Activated CD4-positive, alpha-beta memory T cell treated with anti-CD3 and anti-CD28 coated beads for 36 hours (primary cell): ENCODE measurements at regions of chr12 and their contacts with region 1.

Region 1: GRCh38 chr12:48197971-48198671 is 5.0 kb downstream of the OR10AD1 start:
- DNase-seq: peak; percentile 97
- H3K4me3 Mint-ChIP-seq: peak overlapping the region; percentile 86
- H3K27ac Mint-ChIP-seq: peak overlapping the region; percentile 99
- H3K4me1 Mint-ChIP-seq: peaks cover 31% of the 10 kb centered on the region
- H3K27me3 Mint-ChIP-seq: peaks cover 5% of the 10 kb centered on the region

Region 2: DNA sequence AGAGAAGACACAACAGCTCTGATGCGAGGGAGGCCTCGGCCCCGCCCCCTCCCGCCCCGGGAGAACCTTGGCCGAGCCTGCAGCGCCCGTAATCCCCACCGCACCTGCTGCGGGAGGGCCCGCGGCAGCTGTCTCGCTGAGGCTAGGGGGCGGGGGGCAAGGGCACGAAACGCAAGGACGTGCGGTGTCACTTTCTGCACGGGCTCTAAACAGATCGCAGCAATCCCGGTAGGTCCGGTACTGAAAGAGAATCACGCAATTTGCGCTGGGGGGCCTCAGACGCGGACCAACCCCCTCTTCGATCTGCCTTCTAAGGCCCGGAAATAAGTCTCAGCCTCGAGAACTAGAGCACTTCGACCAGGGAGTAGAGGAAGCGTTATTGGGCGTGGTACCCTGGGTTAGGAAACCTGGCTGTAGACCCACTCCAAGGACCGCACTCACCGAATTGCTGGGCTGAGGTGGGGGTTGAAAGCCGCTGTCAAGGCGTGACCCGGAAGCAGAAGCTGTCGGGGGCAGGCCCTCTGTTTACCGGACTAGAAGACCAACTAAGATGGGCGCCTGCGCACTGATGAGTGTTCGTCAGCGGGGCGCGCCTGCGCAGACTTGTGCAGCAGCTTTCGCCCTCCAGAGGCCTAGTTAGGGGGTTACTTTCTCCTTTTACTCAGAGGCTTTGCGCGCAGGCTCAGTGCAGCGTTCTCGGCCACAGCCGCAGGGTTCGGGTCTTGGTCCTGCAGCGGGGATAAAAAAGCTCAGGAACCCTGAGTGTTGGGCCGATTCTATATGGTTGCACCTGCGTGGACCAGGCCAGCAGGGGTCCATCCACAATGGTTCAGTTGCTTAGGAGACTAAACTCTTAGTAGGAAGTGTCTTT is 40.9 kb before region 1 on chr12 and contains the start of gene ASB8:
- CTCF ChIA-PET with region 1: interaction called, 6 read pairs
- POLR2A ChIA-PET with region 1: interaction called, 13 read pairs
- intact Hi-C with region 1: loop called (anchors 1 kb)
- DNase-seq: peak; percentile 100
- H3K4me3 Mint-ChIP-seq: peak within 1 kb of the TSS; percentile 94
- H3K27ac Mint-ChIP-seq: peak within 1 kb of the TSS; percentile 96
- H3K4me1 Mint-ChIP-seq: peaks cover 37% of the 10 kb centered on the region
- H3K27me3 Mint-ChIP-seq: no peaks in the 10 kb centered on the region
- total RNA-seq, gene ASB8: 31.4 to 33.6 TPM

Region 3: GRCh38 chr12:48350249-48351021 is 152.3 kb after region 1 on chr12 and contains the start of gene ZNF641:
- CTCF ChIA-PET with region 1: no interaction called
- POLR2A ChIA-PET with region 1: interaction called, 3 read pairs
- intact Hi-C with region 1: loop called (anchors 2 kb)
- DNase-seq: peak; percentile 83
- H3K4me3 Mint-ChIP-seq: peak within 1 kb of the TSS; percentile 93
- H3K27ac Mint-ChIP-seq: peak within 1 kb of the TSS; percentile 83
- H3K4me1 Mint-ChIP-seq: peaks cover 27% of the 10 kb centered on the region
- H3K27me3 Mint-ChIP-seq: no peaks in the 10 kb centered on the region
- total RNA-seq, gene ZNF641: 6.8 to 9.3 TPM

Region 4: GRCh38 chr12:48681738-48682532 is 483.8 kb after region 1 on chr12 and contains the start of gene KANSL2:
- CTCF ChIA-PET with region 1: no interaction called
- POLR2A ChIA-PET with region 1: no interaction called
- intact Hi-C with region 1: loop called (anchors 1 kb)
- DNase-seq: peak; percentile 99
- H3K4me3 Mint-ChIP-seq: peak within 1 kb of the TSS; percentile 99
- H3K27ac Mint-ChIP-seq: peak within 1 kb of the TSS; percentile 94
- H3K4me1 Mint-ChIP-seq: peaks cover 41% of the 10 kb centered on the region
- H3K27me3 Mint-ChIP-seq: no peaks in the 10 kb centered on the region
- total RNA-seq, gene KANSL2: 45.7 to 48.4 TPM